Spleen (tissue), 13 donors: ENCODE measurements at regions of chr9 and their contacts with region 1.

Region 1: DNA sequence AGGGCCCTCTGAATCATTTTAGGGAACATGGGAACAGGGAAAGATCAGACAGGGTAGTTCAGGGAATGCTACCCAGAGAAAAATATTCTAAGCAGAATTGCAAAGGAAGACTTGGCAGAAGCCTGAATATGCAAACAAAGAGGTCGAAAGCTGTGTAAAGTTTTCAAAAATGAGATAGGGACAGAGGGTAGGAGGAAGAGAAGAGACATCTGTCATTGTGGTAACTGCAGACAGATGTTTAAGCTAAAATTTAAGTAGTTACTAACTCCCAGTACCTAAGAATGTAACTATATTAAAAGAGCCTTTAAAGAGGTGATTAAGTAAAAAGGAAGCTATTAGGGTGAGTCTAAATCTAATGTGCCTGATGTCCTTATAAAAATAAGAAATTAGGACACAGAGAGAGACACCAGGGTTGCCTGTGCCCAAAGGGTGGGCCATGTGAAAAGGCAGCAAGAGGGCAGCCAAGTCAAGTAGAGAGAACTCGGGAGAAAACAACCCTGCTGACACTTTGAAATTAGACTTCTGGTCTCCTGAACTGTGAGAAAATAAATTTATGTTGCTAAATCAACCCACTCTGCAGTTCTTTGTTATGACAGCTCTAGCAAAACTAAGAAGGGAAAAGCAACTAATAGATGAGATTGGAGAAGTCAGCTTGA is 1647.4 kb upstream of the C9orf72 start:
- DNase-seq: no peak
- H3K4me3 ChIP-seq: no peak overlapping the region
- H3K27ac ChIP-seq: no peak overlapping the region
- H3K4me1 ChIP-seq: no peaks in the 10 kb centered on the region
- H3K27me3 ChIP-seq: peaks cover 0 to 26% (median 11%) of the 10 kb centered on the region in 7 donors
- CTCF ChIP-seq: no peak
- POLR2A ChIP-seq: no peak

Region 2: GRCh38 chr9:28810375-28811075 is 410.2 kb before region 1 on chr9:
- intact Hi-C with region 1: loop called (anchors 5 kb)
- DNase-seq: no peak
- H3K4me3 ChIP-seq: no peak overlapping the region
- H3K27ac ChIP-seq: no peak overlapping the region
- H3K4me1 ChIP-seq: no peaks in the 10 kb centered on the region
- H3K27me3 ChIP-seq: no peaks in the 10 kb centered on the region
- CTCF ChIP-seq: no peak
- POLR2A ChIP-seq: no peak